K562 (cell line): ENCODE measurements at regions of chr3 and their contacts with region 1.

Region 1: GRCh38 chr3:85502148-85502875 is 543.5 kb downstream of the CADM2 start:
- DNase-seq: no peak
- ATAC-seq: peak; percentile 2; the same call in 1 of the 3 replicates
- H3K4me3 ChIP-seq: peak overlapping the region; percentile 53
- H3K27ac ChIP-seq: peak overlapping the region; percentile 74
- H3K4me1 ChIP-seq: no peaks in the 10 kb centered on the region; a peak in 1 of 5 replicates
- H3K27me3 ChIP-seq: no peaks in the 10 kb centered on the region
- CTCF ChIP-seq: no peak
- EP300 ChIP-seq: no peak
- POLR2A ChIP-seq: no peak
- RAD21 ChIP-seq: no peak

Region 2: DNA sequence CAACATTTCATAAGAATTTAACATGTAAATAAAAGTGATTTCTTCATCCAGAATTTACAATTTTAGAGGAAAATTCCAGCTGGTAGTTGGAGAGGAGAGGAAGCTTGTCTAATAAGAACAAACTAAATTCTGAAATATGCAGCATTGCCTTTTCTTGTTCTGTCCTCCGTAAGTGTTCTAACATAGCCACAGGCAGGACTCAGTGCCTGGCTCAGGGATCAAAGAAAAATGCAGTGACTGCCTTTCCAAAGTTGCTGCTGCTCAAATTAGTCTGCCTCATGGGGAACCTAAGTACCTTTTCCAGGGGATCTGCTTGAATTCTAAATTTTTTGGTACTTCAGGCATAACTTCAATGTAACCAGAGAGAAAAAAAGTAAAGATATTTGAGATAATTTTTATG is 1256.5 kb before region 1 on chr3:
- CTCF ChIA-PET with region 1: no interaction called
- POLR2A ChIA-PET with region 1: no interaction called
- in situ Hi-C with region 1: no loop called
- intact Hi-C with region 1: loop called (anchors 2 kb)
- DNase-seq: peak in 2 of 4 experiments; percentile 10 to 58
- ATAC-seq: peak; percentile 57
- H3K4me3 ChIP-seq: peak overlapping the region; percentile 33
- H3K27ac ChIP-seq: peak overlapping the region; percentile 87
- H3K4me1 ChIP-seq: no peaks in the 10 kb centered on the region; a peak in 1 of 5 replicates
- H3K27me3 ChIP-seq: no peaks in the 10 kb centered on the region
- CTCF ChIP-seq: no peak
- EP300 ChIP-seq: no peak
- POLR2A ChIP-seq: no peak
- RAD21 ChIP-seq: no peak

Region 3: DNA sequence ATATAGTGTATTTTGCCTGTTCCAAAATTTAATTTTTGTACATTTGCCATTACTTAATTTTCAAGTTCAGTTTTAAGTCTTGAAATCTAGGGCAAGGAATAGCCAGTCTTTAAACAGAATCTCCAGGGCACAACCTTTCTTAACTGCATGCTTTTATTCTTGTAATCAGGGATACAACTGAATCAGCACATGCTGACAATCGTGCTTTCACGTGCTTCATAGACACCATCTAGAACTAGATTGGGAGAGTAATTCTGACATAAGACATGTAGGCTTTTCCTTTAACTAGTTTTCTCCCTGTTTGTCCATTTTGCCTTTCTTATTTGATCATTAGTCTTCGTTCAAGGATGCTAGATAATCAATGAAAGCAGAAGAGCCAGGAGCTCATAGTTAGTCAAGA is 1193.9 kb before region 1 on chr3:
- CTCF ChIA-PET with region 1: no interaction called
- POLR2A ChIA-PET with region 1: no interaction called
- in situ Hi-C with region 1: no loop called
- intact Hi-C with region 1: loop called (anchors 2 kb)
- DNase-seq: no peak
- ATAC-seq: peak; percentile 29
- H3K4me3 ChIP-seq: no peak overlapping the region; the same call in 1 of the 2 replicates
- H3K27ac ChIP-seq: peak overlapping the region; percentile 71
- H3K4me1 ChIP-seq: no peaks in the 10 kb centered on the region; a peak in 1 of 5 replicates
- H3K27me3 ChIP-seq: no peaks in the 10 kb centered on the region
- CTCF ChIP-seq: no peak
- EP300 ChIP-seq: no peak
- POLR2A ChIP-seq: no peak
- RAD21 ChIP-seq: no peak

Region 4: GRCh38 chr3:85567071-85567676 is 64.9 kb after region 1 on chr3:
- CTCF ChIA-PET with region 1: no interaction called
- POLR2A ChIA-PET with region 1: interaction called, 3 read pairs
- in situ Hi-C with region 1: no loop called
- intact Hi-C with region 1: loop called (anchors 2 kb)
- DNase-seq: peak; percentile 27 to 69 (median 35)
- ATAC-seq: peak; percentile 85
- H3K4me3 ChIP-seq: no peak overlapping the region
- H3K27ac ChIP-seq: no peak overlapping the region
- H3K4me1 ChIP-seq: no peaks in the 10 kb centered on the region
- H3K27me3 ChIP-seq: no peaks in the 10 kb centered on the region
- CTCF ChIP-seq: peak; percentile 55 to 67 (median 62)
- EP300 ChIP-seq: no peak
- POLR2A ChIP-seq: no peak
- RAD21 ChIP-seq: peak; percentile 44 to 67

Region 5: GRCh38 chr3:85726241-85726640 is 223.9 kb after region 1 on chr3:
- CTCF ChIA-PET with region 1: no interaction called
- POLR2A ChIA-PET with region 1: no interaction called
- in situ Hi-C with region 1: no loop called
- intact Hi-C with region 1: no loop called
- DNase-seq: no peak
- ATAC-seq: no peak
- H3K4me3 ChIP-seq: no peak overlapping the region
- H3K27ac ChIP-seq: no peak overlapping the region
- H3K4me1 ChIP-seq: no peaks in the 10 kb centered on the region
- H3K27me3 ChIP-seq: no peaks in the 10 kb centered on the region
- CTCF ChIP-seq: no peak
- EP300 ChIP-seq: no peak
- POLR2A ChIP-seq: no peak
- RAD21 ChIP-seq: no peak